Aorta (tissue), 5 donors: ENCODE measurements at regions of chr10 and their contacts with region 1.

Region 1: GRCh38 chr10:92432596-92432995 is 141.3 kb downstream of the IDE start:
- DNase-seq: no peak
- ATAC-seq: no peak
- H3K4me3 ChIP-seq: no peak overlapping the region
- H3K27ac ChIP-seq: no peak overlapping the region
- H3K4me1 ChIP-seq: no peaks in the 10 kb centered on the region
- H3K27me3 ChIP-seq: no peaks in the 10 kb centered on the region

Region 2: GRCh38 chr10:91923371-91924211 is 509.0 kb before region 1 on chr10 and contains the start of gene BTAF1:
- intact Hi-C with region 1: loop called in 1 of 2 experiments (anchors 10 kb)
- DNase-seq: peak; percentile 96 to 99
- ATAC-seq: peak; percentile 99
- H3K4me3 ChIP-seq: peak within 1 kb of the TSS; percentile 27 to 72
- H3K27ac ChIP-seq: peak within 1 kb of the TSS; percentile 49 to 92
- H3K4me1 ChIP-seq: peaks cover 1 to 2% of the 10 kb centered on the region in 2 donors
- H3K27me3 ChIP-seq: no peaks in the 10 kb centered on the region
- total RNA-seq, gene BTAF1: 45.2 to 48.2 TPM

Region 3: GRCh38 chr10:92087750-92088395 is 344.7 kb before region 1 on chr10:
- intact Hi-C with region 1: loop called (anchors 1 to 2 kb)
- DNase-seq: peak in 1 of 2 donors; percentile 66
- ATAC-seq: peak; percentile 92
- H3K4me3 ChIP-seq: no peak overlapping the region
- H3K27ac ChIP-seq: no peak overlapping the region
- H3K4me1 ChIP-seq: no peaks in the 10 kb centered on the region
- H3K27me3 ChIP-seq: no peaks in the 10 kb centered on the region